MCF 10A (cell line): ENCODE measurements at regions of chr11 and their contacts with region 1.

Region 1: GRCh38 chr11:130861902-130862860 is 54.1 kb downstream of the SNX19 start:
- DNase-seq: peak; percentile 88
- H3K4me3 Mint-ChIP-seq: no peak overlapping the region
- H3K27ac Mint-ChIP-seq: no peak overlapping the region
- H3K4me1 Mint-ChIP-seq: no peaks in the 10 kb centered on the region
- H3K27me3 Mint-ChIP-seq: no peaks in the 10 kb centered on the region
- CTCF ChIP-seq: peak; percentile 100

Region 2: DNA sequence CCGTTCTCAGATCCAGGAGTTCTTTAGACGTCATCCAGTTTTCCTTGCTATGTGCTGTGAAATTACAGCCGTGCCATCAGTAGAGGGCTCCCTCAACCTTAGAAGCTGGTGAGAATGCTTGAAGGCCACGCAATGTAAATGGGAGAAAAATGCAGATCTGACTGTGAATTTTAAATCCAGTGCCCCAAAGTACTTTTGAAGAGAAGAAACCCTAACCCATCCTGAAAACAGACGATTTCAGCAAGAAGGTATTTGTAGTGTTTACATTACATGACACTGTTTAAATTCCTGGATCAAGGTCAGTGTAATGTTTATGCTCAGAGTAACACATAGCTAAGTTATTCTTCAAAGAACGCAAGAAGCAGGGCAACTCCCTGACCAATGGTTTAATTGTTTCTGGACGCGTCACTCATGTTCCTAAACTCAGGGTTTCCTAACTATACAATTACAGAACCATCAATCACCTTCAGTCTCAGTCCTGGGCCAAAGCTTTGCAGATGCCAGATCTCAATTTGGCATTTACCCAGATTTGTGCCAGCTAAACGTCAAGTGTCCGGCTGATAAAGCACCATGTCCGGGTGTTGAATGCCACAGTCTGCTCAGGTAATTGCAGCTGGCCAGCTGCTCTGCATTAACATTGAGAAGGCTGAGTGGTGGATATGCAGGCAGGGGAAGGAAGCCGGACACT is 472.0 kb before region 1 on chr11:
- CTCF ChIA-PET with region 1: interaction called, 12 read pairs
- POLR2A ChIA-PET with region 1: no interaction called
- intact Hi-C with region 1: no loop called
- DNase-seq: peak; percentile 63
- H3K4me3 Mint-ChIP-seq: no peak overlapping the region
- H3K27ac Mint-ChIP-seq: no peak overlapping the region
- H3K4me1 Mint-ChIP-seq: peaks cover 15% of the 10 kb centered on the region
- H3K27me3 Mint-ChIP-seq: peaks cover 36% of the 10 kb centered on the region
- CTCF ChIP-seq: peak; percentile 47

Region 3: GRCh38 chr11:130448416-130449309 is 413.5 kb before region 1 on chr11 and contains the start of gene ADAMTS15:
- CTCF ChIA-PET with region 1: interaction called, 1,064 read pairs
- POLR2A ChIA-PET with region 1: interaction called, 3 read pairs
- intact Hi-C with region 1: no loop called
- DNase-seq: peak; percentile 89
- H3K4me3 Mint-ChIP-seq: peak within 1 kb of the TSS; percentile 72
- H3K27ac Mint-ChIP-seq: no peak within 1 kb of the TSS
- H3K4me1 Mint-ChIP-seq: no peaks in the 10 kb centered on the region
- H3K27me3 Mint-ChIP-seq: no peaks in the 10 kb centered on the region
- CTCF ChIP-seq: no peak
- total RNA-seq, gene ADAMTS15: 0.54 and 0.70 TPM in 2 replicates

Region 4: GRCh38 chr11:130827451-130828377 is 34.5 kb before region 1 on chr11:
- CTCF ChIA-PET with region 1: interaction called, 144 read pairs
- POLR2A ChIA-PET with region 1: interaction called, 3 read pairs
- intact Hi-C with region 1: loop called (anchors 1 kb)
- DNase-seq: peak; percentile 72
- H3K4me3 Mint-ChIP-seq: no peak overlapping the region
- H3K27ac Mint-ChIP-seq: no peak overlapping the region
- H3K4me1 Mint-ChIP-seq: no peaks in the 10 kb centered on the region
- H3K27me3 Mint-ChIP-seq: no peaks in the 10 kb centered on the region
- CTCF ChIP-seq: peak; percentile 71

Region 5: DNA sequence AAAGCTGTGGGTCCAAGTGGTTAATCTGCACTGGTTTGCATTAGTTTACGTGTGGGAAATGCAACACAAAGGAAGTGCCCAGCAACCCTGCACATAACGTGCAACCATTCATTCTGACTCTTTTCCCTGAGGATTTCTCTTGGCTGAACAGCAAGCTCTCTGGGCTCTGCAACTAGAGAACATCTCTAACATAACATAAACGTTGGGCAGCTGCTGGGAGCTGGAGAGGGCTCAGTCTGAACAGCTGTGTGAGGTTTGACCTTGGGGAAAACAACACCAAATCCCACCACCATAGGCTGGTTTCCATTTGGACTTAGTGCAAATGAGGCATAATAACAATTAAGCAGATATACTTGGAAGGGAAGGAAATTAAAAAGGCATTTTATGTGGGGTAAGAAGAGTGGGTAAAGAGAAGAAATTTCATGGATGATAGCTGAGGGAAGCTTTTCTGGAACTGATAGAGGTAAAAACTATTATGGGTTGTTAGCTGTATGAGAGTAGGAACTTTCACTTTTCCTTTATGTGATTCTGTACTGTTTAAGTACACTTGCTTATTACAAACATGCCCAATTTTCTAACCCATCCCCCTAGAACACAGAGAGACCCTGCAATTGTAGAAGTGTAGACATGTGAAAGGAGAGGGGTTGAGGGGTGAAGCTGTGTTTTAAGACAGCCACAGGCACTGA is 22.1 kb before region 1 on chr11:
- CTCF ChIA-PET with region 1: interaction called, 49 read pairs
- POLR2A ChIA-PET with region 1: interaction called, 3 read pairs
- intact Hi-C with region 1: no loop called
- DNase-seq: no peak
- H3K4me3 Mint-ChIP-seq: no peak overlapping the region
- H3K27ac Mint-ChIP-seq: no peak overlapping the region
- H3K4me1 Mint-ChIP-seq: no peaks in the 10 kb centered on the region
- H3K27me3 Mint-ChIP-seq: no peaks in the 10 kb centered on the region
- CTCF ChIP-seq: no peak

Region 6: DNA sequence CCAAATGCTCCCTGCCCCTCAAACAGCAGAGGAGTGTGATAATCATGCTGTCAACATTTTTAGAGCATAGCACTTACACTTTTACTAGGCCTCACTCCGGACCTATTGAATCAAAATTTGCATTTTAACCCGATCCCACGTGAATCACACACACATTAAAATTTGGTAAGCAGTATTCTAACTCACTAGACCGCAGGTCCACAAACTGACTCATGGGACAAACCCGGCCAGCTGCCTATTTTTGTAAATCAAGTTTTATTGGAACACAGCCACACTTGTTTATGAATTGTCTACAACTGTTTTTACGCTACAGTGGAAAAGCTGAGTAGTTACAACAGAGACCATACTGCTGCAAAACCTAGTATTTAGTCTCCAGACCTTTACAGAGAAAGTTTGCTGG is 10.8 kb after region 1 on chr11:
- CTCF ChIA-PET with region 1: interaction called, 47 read pairs
- POLR2A ChIA-PET with region 1: interaction called, 7 read pairs
- intact Hi-C with region 1: no loop called
- DNase-seq: peak; percentile 74
- H3K4me3 Mint-ChIP-seq: no peak overlapping the region
- H3K27ac Mint-ChIP-seq: peak overlapping the region; percentile 19
- H3K4me1 Mint-ChIP-seq: peaks cover 9% of the 10 kb centered on the region
- H3K27me3 Mint-ChIP-seq: no peaks in the 10 kb centered on the region
- CTCF ChIP-seq: no peak

Region 7: DNA sequence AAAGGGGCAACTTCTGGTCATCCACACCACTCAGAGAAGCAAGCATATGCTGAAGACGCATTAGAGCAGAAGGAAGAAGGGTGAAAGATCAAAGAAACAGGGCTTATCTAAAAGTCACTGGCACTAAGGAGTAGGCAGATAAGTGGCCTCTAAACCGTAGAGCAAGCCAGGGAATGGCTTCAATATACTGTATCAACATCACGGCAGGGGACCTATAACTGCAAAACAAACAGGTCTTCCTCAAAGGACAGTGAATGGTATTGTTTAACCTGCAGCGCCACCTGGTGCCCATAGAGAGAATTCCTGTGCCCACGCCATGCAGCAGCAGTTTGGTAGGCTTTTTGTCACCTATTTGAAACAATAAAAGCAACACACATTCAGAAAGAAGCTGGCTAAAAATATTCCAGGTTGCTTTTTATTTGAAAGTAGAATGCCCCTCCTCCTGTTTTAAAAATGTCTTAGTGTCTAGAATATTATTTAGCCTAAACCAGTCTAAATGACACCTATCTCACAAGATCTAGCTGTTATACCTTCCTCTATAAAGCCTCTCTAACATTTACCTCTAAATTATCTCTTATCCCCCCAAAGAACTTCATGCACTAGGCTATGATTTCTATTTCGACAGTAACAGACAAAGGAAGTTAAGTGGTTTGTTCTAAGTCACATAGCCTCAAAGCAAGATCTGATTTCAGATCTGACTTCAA is 32.3 kb after region 1 on chr11:
- CTCF ChIA-PET with region 1: interaction called, 47 read pairs
- POLR2A ChIA-PET with region 1: interaction called, 4 read pairs
- intact Hi-C with region 1: loop called (anchors 1 kb)
- DNase-seq: peak; percentile 85
- H3K4me3 Mint-ChIP-seq: no peak overlapping the region
- H3K27ac Mint-ChIP-seq: no peak overlapping the region
- H3K4me1 Mint-ChIP-seq: peaks cover 15% of the 10 kb centered on the region
- H3K27me3 Mint-ChIP-seq: no peaks in the 10 kb centered on the region
- CTCF ChIP-seq: peak; percentile 70